ENCODE measurements at regions of chr14 and their contacts with region 1.

Region 1: DNA sequence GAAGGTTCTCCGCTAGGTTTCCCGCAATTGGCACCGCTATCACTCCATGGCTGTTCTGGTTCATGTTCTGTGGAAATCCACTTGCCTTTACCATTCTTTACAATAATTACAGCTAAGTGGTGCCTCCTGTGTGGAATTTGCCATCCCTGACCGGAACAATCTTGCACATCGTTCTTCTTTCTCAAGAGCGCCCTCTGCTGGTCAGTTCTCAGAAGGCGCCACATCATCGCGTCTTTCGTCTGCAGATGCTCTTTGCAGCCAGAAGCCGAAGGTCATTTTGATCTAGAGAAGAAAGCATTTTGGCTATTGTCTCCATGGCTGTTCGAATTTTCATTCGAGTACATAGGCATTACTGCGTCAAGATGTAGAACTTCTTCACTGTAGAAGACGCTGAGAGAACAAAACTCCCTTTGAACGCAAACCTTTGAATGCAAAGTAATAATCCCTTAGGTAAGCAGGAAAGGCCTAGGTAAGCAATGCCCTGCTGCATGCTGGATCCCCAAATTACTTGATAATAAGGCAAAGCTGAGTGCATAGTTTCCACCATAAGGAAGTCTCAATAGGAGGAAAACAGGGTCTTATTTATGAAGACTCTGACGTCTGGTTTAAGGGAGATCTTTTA is 10.1 kb upstream of the RTRAF start:
- DNase-seq: peak; percentile 52
- CTCF ChIP-seq: peak; percentile 91

Region 2: GRCh38 chr14:51860164-51860824 is 118.9 kb before region 1 on chr14 and contains the start of gene GNG2:
- CTCF ChIA-PET with region 1: interaction called, 11 read pairs
- POLR2A ChIA-PET with region 1: no interaction called
- DNase-seq: peak; percentile 77
- CTCF ChIP-seq: no peak

Region 3: DNA sequence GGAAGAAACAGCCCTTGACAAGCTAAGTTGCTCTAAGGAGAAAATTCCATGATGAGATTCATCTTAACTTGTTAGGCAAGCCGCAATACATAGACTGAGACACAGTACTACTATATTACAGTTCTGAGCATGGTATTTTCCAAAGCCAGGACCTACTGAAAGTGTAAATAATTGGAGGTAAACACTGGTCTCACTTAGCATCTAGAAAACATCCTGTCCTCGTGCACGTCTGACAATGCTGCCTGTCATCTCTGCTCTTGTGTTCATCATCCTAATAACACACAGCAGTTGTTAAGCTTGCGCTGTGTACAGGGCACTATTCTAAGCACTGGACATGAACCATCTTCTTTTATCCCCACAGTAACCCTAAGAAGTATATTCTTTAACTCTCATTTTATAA is 54.6 kb before region 1 on chr14:
- CTCF ChIA-PET with region 1: no interaction called
- POLR2A ChIA-PET with region 1: no interaction called
- DNase-seq: no peak
- CTCF ChIP-seq: no peak

Region 4: GRCh38 chr14:51954031-51954430 is 25.2 kb before region 1 on chr14:
- CTCF ChIA-PET with region 1: interaction called, 12 read pairs
- POLR2A ChIA-PET with region 1: no interaction called
- DNase-seq: no peak
- CTCF ChIP-seq: no peak

Region 5: DNA sequence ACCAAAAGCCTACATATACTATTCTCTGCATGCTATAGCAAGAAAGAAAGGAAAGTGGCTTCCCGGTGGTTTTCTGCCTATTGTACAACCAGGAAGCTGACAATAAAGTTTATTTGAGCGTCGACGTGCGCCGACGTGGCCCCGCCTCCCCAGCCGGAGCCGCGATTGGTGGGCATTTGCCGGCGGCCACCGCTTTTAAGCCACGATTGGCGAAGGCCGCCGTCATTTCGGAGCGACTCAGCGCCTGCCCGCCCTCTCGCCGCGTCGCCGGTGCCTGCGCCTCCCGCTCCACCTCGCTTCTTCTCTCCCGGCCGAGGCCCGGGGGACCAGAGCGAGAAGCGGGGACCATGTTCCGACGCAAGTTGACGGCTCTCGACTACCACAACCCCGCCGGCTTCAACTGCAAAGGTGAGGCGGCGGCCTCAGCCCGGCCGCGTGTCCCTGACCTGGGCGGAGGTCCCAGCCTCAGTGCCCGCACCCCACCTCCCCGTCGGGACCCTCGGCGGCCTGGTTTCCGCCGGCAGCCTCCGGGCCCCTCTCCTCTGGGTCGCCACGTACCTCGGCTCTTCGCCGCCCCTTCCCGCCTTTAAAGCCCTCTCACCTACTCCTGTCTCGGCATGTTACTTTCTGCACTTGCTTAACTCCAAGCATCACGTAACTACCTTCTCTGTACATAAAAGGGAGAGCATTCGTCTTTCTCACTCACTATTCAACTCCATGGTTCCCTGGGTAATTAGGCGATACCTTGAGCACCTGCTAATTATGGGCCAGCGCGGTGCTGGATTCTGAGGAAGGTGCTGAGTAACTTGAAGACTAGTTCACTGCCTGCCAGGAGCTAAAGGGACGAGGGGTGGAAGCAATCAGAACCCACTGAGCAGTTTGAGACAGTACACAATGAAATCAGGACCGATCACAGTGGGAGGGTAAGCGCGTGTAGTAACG is 10.4 kb after region 1 on chr14 and contains the start of gene RTRAF:
- CTCF ChIA-PET with region 1: interaction called, 47 read pairs
- POLR2A ChIA-PET with region 1: no interaction called
- DNase-seq: peak; percentile 96
- CTCF ChIP-seq: no peak

Measured in GM10248 (cell line).